ENCODE measurements at regions of chr7 and their contacts with region 1.

Region 1: GRCh38 chr7:1412322-1413261 is 46.7 kb downstream of the MICALL2 start:
- DNase-seq: peak; percentile 92
- H3K4me3 ChIP-seq: peak overlapping the region; percentile 44
- H3K27ac ChIP-seq: no peak overlapping the region
- H3K4me1 ChIP-seq: peaks cover 3% of the 10 kb centered on the region
- CTCF ChIP-seq: peak; percentile 90

Region 2: GRCh38 chr7:1193593-1194424 is 218.8 kb before region 1 on chr7:
- CTCF ChIA-PET with region 1: interaction called, 3 read pairs
- POLR2A ChIA-PET with region 1: no interaction called
- intact Hi-C with region 1: loop called (anchors 5 kb)
- DNase-seq: peak; percentile 27
- H3K4me3 ChIP-seq: no peak overlapping the region
- H3K27ac ChIP-seq: no peak overlapping the region
- H3K4me1 ChIP-seq: no peaks in the 10 kb centered on the region
- CTCF ChIP-seq: peak; percentile 68

Region 3: DNA sequence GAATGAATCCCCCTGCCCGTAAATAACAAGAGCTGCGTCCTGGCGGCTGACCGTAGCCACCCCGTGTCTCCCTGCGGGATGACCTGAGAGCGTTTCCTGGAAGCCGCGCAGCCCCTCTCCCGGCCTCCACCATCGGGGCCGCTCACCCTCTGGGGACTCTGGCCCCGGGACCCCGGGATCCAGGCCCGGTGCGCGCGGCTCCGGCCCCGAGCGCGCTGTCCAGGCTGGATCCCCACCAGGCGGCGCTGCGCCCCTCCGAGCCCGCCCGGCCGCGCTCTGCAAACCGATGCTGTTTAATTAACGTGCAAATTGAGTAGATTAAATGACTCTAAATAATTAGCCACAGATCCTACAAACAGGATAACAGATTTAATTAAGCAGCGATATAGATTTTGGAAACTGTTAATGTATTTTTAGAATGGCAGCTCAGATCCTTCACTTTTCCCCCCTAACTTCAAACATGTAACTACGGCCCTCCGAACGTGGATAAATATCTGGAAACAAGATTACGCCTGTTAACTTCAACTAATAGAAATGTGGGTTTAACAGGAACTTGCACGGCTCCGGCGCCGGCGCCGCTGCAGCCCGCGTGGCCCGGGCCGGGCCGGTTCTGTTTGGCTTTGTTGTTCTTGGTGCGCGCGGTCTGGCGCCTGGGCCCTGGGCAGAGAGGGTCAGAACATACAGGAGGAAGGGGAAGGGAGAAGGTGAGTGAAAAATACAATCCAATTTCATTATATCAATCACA is 187.0 kb before region 1 on chr7:
- CTCF ChIA-PET with region 1: no interaction called
- POLR2A ChIA-PET with region 1: interaction called, 3 read pairs
- intact Hi-C with region 1: loop called (anchors 2 kb)
- DNase-seq: no peak
- H3K4me3 ChIP-seq: no peak overlapping the region
- H3K27ac ChIP-seq: no peak overlapping the region
- H3K4me1 ChIP-seq: no peaks in the 10 kb centered on the region
- CTCF ChIP-seq: peak; percentile 40; the same call in 1 of the 2 replicates

Region 4: DNA sequence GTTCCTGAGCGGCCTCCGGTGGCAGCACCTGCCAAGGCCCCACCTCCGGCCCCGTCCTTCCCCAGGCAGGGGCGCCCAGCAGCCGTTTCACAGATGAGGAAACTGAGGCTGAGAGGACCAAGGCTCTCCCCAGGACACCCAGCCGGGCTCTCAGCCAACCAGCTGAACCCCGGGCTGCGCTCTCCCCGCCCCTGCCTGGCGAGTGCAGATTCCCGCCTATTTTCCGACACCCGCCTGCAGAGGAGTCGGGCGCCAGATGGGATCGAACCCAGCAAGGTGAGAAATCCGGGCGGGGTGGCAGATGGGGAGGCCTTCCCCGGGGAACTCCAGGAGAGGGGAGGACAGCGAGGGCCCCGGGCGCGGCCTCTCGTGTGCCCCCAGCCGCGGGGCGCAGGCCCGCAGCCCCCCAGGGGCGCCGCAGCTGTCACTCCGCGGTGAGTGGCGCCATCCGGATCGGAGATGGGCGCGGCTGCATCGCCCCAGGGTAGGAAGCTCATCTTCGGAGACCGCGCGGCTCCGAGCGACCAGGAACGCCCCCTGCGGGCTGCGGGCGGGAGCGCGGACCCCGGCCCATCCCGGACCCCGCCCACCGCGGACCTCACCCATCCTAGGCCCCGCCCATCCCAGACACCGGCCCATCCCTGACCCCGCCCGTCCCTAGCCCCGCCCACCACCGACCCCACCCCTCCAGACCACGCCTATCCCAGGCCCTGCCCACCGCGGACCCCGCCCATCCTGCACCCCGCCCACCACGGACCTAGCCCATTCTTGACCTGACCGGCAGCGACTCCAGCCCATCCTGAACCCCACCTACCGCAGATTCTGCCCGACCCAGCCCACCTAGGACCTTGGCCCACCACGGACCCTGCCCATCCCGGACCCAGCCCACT is 43.7 kb before region 1 on chr7:
- CTCF ChIA-PET with region 1: no interaction called
- POLR2A ChIA-PET with region 1: no interaction called
- intact Hi-C with region 1: no loop called
- DNase-seq: peak; percentile 20
- H3K4me3 ChIP-seq: no peak overlapping the region
- H3K27ac ChIP-seq: no peak overlapping the region
- H3K4me1 ChIP-seq: no peaks in the 10 kb centered on the region
- CTCF ChIP-seq: 0 out of 2 replicates have a peak, but pooled peaks have one; percentile 26